ENCODE measurements at regions of chr7 and their contacts with region 1.

Region 1: DNA sequence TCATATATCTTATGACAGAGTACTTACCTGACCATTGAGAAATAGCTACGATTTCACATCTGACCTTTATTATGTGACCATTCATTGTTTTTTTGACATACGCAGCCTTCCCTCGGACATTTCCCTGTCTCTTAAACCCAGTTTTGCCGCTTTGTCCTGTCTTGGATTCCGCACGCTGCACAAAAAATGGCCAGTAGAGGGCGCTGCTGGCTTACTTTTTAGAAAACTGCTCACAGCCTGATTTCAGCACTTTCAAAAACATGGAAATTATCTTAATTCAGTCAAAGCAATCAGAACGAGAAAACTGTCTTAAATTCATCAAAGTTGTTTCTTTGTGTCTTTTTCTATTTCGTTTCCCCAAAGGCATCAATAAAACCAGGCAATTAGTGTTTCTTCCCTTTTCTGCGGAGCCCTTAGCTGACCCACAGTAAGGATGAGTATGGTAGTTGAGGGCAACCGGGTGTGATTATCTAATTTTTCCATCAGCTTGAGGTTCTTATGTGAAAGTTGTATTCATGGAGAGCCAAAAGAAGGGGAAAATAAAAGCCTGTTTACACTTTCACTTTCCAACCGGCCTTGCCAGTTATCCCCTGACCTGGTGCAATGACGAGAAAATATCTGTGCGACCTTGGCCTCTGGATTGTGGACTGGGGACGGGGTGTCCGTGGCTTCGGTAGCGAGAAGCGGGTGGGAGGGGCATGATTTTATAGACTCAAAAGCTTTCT is 144.4 kb downstream of the DYNC1I1 start:
- DNase-seq: peak; percentile 77
- H3K4me3 ChIP-seq: no peak overlapping the region
- H3K27ac ChIP-seq: no peak overlapping the region
- H3K4me1 ChIP-seq: no peaks in the 10 kb centered on the region
- H3K27me3 ChIP-seq: peaks cover 20 to 21% of the 10 kb centered on the region in 2 experiments
- CTCF ChIP-seq: peak; percentile 72 to 94
- POLR2A ChIP-seq: no peak

Region 2: GRCh38 chr7:96219382-96220130 is 302.8 kb after region 1 on chr7:
- CTCF ChIA-PET with region 1: no interaction called
- POLR2A ChIA-PET with region 1: no interaction called
- dilution Hi-C with region 1: no loop called
- intact Hi-C with region 1: loop called (anchors 5 kb)
- DNase-seq: peak; percentile 59
- H3K4me3 ChIP-seq: no peak overlapping the region
- H3K27ac ChIP-seq: no peak overlapping the region
- H3K4me1 ChIP-seq: no peaks in the 10 kb centered on the region
- H3K27me3 ChIP-seq: no peaks in the 10 kb centered on the region
- CTCF ChIP-seq: no peak
- POLR2A ChIP-seq: no peak

Region 3: DNA sequence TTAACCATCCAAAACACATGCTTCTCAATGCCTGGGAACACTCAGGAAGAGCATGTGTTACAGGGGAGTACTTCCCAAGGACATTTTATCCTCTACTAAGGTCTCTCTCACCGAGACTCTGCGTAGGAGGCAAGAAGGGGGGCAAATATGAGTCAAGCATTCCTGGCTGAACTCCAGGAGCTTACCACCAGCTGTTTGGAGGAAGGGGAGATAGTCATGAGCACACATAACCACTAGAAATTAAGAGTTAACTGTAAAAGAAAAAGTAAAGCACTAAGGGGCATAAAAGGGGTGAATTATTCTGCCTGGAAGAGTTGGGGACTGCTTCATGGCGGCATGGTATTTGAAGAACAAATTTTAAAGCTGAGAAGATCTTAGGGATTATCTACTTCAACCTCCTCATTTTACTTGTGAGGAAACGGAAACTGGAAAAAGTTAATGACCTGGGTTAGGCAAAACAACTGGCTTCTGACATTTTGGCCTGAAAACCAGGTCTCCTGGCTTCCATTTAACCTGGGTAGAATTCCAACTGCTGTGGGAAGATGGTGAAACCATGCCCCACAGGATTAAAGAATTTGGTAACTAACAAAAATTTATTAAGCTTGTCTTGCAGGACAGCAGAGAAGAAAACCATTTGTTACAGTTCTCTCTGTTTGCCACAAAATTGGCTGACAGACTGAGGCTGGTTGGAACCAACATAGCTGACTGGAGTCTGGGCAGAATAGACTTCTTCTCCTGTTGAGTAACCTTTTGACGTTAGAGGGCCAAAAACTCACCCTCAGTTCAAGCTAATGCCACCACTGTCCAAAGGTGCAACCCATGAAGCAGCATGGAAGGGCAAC is 319.7 kb after region 1 on chr7:
- CTCF ChIA-PET with region 1: no interaction called
- POLR2A ChIA-PET with region 1: no interaction called
- dilution Hi-C with region 1: no loop called
- intact Hi-C with region 1: no loop called
- DNase-seq: peak; percentile 97
- H3K4me3 ChIP-seq: no peak overlapping the region
- H3K27ac ChIP-seq: peak overlapping the region; percentile 2
- H3K4me1 ChIP-seq: peaks cover 18% of the 10 kb centered on the region
- H3K27me3 ChIP-seq: no peaks in the 10 kb centered on the region
- CTCF ChIP-seq: no peak
- POLR2A ChIP-seq: no peak

Region 4: GRCh38 chr7:96596120-96596826 is 679.5 kb after region 1 on chr7:
- CTCF ChIA-PET with region 1: no interaction called
- POLR2A ChIA-PET with region 1: no interaction called
- dilution Hi-C with region 1: no loop called
- intact Hi-C with region 1: loop called (anchors 5 kb)
- DNase-seq: peak; percentile 21
- H3K4me3 ChIP-seq: no peak overlapping the region
- H3K27ac ChIP-seq: no peak overlapping the region
- H3K4me1 ChIP-seq: no peaks in the 10 kb centered on the region
- H3K27me3 ChIP-seq: peaks cover 2 to 7% of the 10 kb centered on the region in 2 experiments
- CTCF ChIP-seq: peak in 1 of 2 donors; percentile 10
- POLR2A ChIP-seq: no peak

Region 5: GRCh38 chr7:96778263-96778662 is 861.5 kb after region 1 on chr7:
- CTCF ChIA-PET with region 1: no interaction called
- POLR2A ChIA-PET with region 1: no interaction called
- dilution Hi-C with region 1: no loop called
- intact Hi-C with region 1: loop called (anchors 10 kb)
- DNase-seq: no peak
- H3K4me3 ChIP-seq: no peak overlapping the region
- H3K27ac ChIP-seq: no peak overlapping the region
- H3K4me1 ChIP-seq: no peaks in the 10 kb centered on the region
- H3K27me3 ChIP-seq: peaks cover 0 to 3% of the 10 kb centered on the region in 2 experiments
- CTCF ChIP-seq: no peak
- POLR2A ChIP-seq: no peak

Region 6: GRCh38 chr7:97179454-97180104 is 1262.8 kb after region 1 on chr7:
- CTCF ChIA-PET with region 1: interaction called, 3 read pairs
- POLR2A ChIA-PET with region 1: no interaction called
- dilution Hi-C with region 1: no loop called
- intact Hi-C with region 1: loop called (anchors 5 kb)
- DNase-seq: peak; percentile 56
- H3K4me3 ChIP-seq: no peak overlapping the region
- H3K27ac ChIP-seq: no peak overlapping the region
- H3K4me1 ChIP-seq: peaks cover 2% of the 10 kb centered on the region
- H3K27me3 ChIP-seq: no peaks in the 10 kb centered on the region
- CTCF ChIP-seq: peak; percentile 57 to 82
- POLR2A ChIP-seq: no peak